ENCODE measurements at regions of chr1 and their contacts with region 1.

Region 1: DNA sequence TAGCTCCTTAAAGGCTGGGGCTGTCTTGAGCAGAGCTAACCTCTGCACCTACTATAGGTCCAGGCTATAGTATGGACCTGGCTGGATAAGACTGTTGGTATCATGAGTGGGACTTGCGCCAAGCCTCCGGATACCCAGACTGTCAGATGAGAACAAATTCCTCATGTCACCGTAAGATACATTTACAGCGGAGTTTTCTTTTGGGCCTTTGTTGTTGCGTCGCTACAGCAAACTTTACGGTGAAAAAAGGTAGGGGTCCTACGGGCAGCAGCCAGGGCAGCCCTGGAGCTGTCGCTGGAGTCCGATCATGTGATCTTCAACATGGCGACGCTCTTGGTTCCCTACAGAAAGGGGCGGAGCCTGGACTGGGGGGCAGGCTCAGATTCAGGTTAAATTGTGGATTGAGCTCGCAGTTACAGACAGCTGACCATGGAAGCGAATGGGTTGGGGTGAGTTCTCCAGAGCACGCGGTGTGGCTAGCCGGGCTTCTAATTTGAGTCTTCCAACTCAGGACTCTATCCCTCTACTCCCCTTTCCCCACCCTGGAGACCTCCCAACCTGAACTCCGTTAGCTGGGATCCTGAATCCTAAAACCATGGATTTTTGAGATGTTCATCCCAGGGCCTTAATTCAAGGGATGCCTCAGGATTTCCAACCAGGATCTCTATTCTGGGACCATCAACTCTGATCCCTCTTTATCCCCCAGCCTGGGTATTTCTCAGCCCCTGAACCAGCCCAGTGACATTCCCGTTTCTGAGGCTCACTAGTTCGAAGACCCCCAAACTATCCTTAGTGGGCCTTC is at the start of gene UROD:
- DNase-seq: peak; percentile 92
- H3K4me3 ChIP-seq: peak within 1 kb of the TSS; percentile 93 to 96
- H3K27ac ChIP-seq: peak within 1 kb of the TSS; percentile 69 to 87
- H3K4me1 ChIP-seq: peaks cover 6 to 36% of the 10 kb centered on the region in 2 experiments
- H3K27me3 ChIP-seq: no peaks in the 10 kb centered on the region
- CTCF ChIP-seq: no peak
- EP300 ChIP-seq: 0 out of 4 replicates have a peak, but pooled peaks of 1 of the 2 experiments have one; percentile 33
- RAD21 ChIP-seq: no peak
- polyA plus RNA-seq, gene UROD: 230 and 247 TPM in 2 replicates

Region 2: GRCh38 chr1:44842862-44843655 is 169.0 kb before region 1 on chr1 and contains the start of gene PTCH2:
- CTCF ChIA-PET with region 1: interaction called, 10 read pairs
- POLR2A ChIA-PET with region 1: interaction called, 15 read pairs
- DNase-seq: peak; percentile 98
- H3K4me3 ChIP-seq: peak within 1 kb of the TSS; percentile 55 to 58
- H3K27ac ChIP-seq: no peak within 1 kb of the TSS; a peak in 1 of 4 replicates
- H3K4me1 ChIP-seq: peaks cover 0 to 2% of the 10 kb centered on the region in 2 experiments; a peak in 1 of 4 replicates
- H3K27me3 ChIP-seq: no peaks in the 10 kb centered on the region
- CTCF ChIP-seq: no peak
- EP300 ChIP-seq: no peak
- RAD21 ChIP-seq: no peak
- polyA plus RNA-seq, gene PTCH2: 1.0 and 1.2 TPM in 2 replicates

Region 3: GRCh38 chr1:44939061-44939460 is 73.0 kb before region 1 on chr1:
- CTCF ChIA-PET with region 1: no interaction called
- POLR2A ChIA-PET with region 1: no interaction called
- DNase-seq: no peak
- H3K4me3 ChIP-seq: no peak overlapping the region
- H3K27ac ChIP-seq: no peak overlapping the region
- H3K4me1 ChIP-seq: no peaks in the 10 kb centered on the region; a peak in 1 of 4 replicates
- H3K27me3 ChIP-seq: no peaks in the 10 kb centered on the region
- CTCF ChIP-seq: no peak
- EP300 ChIP-seq: no peak
- RAD21 ChIP-seq: no peak

Region 4: DNA sequence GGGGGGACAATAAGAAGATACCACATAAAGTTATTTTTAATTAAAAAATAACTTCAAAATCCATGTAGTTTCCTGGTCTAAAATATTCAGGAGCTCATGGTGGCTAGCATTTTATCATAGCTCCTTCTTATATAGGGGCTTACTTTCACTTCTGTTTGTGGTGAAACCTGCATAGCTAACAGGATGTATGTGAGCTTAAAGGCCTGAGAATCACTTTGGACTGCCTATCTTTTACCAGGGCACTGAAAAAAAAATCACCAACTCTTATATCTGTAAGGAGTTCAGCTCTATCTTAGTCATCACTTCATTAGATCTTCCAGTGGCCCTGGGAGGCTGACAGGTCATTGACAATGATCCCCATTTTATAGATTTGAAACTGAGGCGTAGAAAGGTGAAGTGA is 21.3 kb after region 1 on chr1:
- CTCF ChIA-PET with region 1: interaction called, 11 read pairs
- POLR2A ChIA-PET with region 1: no interaction called
- DNase-seq: no peak
- H3K4me3 ChIP-seq: no peak overlapping the region
- H3K27ac ChIP-seq: no peak overlapping the region
- H3K4me1 ChIP-seq: no peaks in the 10 kb centered on the region
- H3K27me3 ChIP-seq: no peaks in the 10 kb centered on the region
- CTCF ChIP-seq: no peak
- EP300 ChIP-seq: no peak
- RAD21 ChIP-seq: no peak

Region 5: GRCh38 chr1:45059829-45060228 is 47.8 kb after region 1 on chr1:
- CTCF ChIA-PET with region 1: no interaction called
- POLR2A ChIA-PET with region 1: no interaction called
- DNase-seq: no peak
- H3K4me3 ChIP-seq: no peak overlapping the region
- H3K27ac ChIP-seq: no peak overlapping the region
- H3K4me1 ChIP-seq: no peaks in the 10 kb centered on the region
- H3K27me3 ChIP-seq: no peaks in the 10 kb centered on the region
- CTCF ChIP-seq: no peak
- EP300 ChIP-seq: no peak
- RAD21 ChIP-seq: no peak

Region 6: DNA sequence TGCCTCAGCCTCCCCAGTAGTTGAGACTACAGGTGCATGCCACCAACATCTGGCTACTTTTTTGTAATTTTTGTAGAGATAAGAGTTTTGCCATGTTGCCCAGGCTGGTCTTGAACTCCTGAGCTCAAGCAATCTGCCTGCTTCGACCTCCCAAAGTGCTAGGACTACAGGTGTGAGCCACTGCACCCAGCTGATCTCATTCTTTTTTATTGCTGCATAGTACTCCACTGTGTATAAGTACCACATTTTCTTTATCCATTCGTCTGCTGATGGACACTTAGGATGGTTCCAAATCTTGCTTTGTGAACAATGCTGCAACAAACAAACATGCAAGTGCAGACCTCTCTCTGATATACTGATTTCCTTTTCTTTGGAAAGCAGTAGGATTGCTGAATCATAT is 59.5 kb after region 1 on chr1:
- CTCF ChIA-PET with region 1: no interaction called
- POLR2A ChIA-PET with region 1: no interaction called
- DNase-seq: no peak
- H3K4me3 ChIP-seq: no peak overlapping the region
- H3K27ac ChIP-seq: no peak overlapping the region
- H3K4me1 ChIP-seq: no peaks in the 10 kb centered on the region
- H3K27me3 ChIP-seq: no peaks in the 10 kb centered on the region
- CTCF ChIP-seq: no peak
- EP300 ChIP-seq: no peak
- RAD21 ChIP-seq: no peak

Region 7: GRCh38 chr1:45291716-45292115 is 279.7 kb after region 1 on chr1:
- CTCF ChIA-PET with region 1: interaction called, 470 read pairs
- POLR2A ChIA-PET with region 1: no interaction called
- DNase-seq: no peak
- H3K4me3 ChIP-seq: no peak overlapping the region
- H3K27ac ChIP-seq: no peak overlapping the region
- H3K4me1 ChIP-seq: no peaks in the 10 kb centered on the region
- H3K27me3 ChIP-seq: no peaks in the 10 kb centered on the region
- CTCF ChIP-seq: no peak
- EP300 ChIP-seq: no peak
- RAD21 ChIP-seq: no peak

Region 8: DNA sequence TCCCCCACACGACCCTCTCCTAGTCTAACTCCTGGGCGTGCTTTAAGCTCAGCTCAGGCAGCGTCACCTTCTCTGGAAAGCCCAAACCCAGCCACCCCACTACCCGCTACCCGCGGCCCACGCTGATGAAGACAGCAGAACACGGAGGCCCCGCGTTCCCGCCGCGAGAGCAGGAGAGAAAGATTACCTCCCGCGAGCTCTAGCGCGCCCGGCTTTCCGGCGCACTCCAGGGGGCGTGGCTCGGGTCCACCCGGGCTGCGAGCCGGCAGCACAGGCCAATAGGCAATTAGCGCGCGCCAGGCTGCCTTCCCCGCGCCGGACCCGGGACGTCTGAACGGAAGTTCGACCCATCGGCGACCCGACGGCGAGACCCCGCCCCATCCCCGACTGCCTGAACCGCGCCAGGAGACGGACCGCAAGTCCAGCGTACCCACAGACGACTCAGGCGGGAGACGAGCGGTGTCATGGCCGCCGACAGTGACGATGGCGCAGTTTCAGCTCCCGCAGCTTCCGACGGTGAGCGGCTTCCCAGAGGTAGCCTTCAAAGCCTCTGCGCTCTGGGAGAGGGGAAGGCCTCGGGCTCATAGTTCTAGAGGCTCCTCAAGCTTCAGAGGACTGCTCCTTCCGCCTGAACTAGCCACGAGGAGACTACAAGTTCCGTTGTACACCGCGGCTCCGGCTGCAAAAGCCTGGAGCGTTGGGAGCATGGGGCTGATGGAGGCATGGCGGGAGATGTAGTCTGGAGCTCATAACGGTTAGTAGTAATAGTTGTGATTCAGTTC is 327.9 kb after region 1 on chr1 and contains the starts of genes MUTYH and TOE1:
- CTCF ChIA-PET with region 1: interaction called, 18 read pairs
- POLR2A ChIA-PET with region 1: interaction called, 23 read pairs
- DNase-seq: peak; percentile 96
- H3K4me3 ChIP-seq: peak within 1 kb of the TSS; percentile 84 to 87
- H3K27ac ChIP-seq: peak within 1 kb of the TSS; percentile 97 to 98
- H3K4me1 ChIP-seq: peaks cover 0 to 11% of the 10 kb centered on the region in 2 experiments; a peak in 1 of 4 replicates
- H3K27me3 ChIP-seq: no peaks in the 10 kb centered on the region
- CTCF ChIP-seq: no peak
- EP300 ChIP-seq: peak in 1 of 2 experiments; percentile 19; a peak in 1 of 4 replicates
- RAD21 ChIP-seq: no peak
- polyA plus RNA-seq, gene MUTYH: 21.9 and 23.3 TPM in 2 replicates
- polyA plus RNA-seq, gene TOE1: 17.3 and 19.1 TPM in 2 replicates

Measured in SK-N-SH (cell line).